ENCODE measurements at regions of chr11 and their contacts with region 1.

Region 1: GRCh38 chr11:118610804-118611795 is 3.7 kb downstream of the PHLDB1 start:
- DNase-seq: peak; percentile 78
- H3K4me3 Mint-ChIP-seq: peak overlapping the region; percentile 59
- H3K27ac Mint-ChIP-seq: no peak overlapping the region
- H3K4me1 Mint-ChIP-seq: peaks cover 24% of the 10 kb centered on the region
- H3K27me3 Mint-ChIP-seq: peaks cover 41% of the 10 kb centered on the region

Region 2: GRCh38 chr11:118621071-118621783 is 10.1 kb after region 1 on chr11:
- CTCF ChIA-PET with region 1: interaction called, 22 read pairs
- POLR2A ChIA-PET with region 1: no interaction called
- DNase-seq: no peak
- H3K4me3 Mint-ChIP-seq: peak overlapping the region; percentile 37
- H3K27ac Mint-ChIP-seq: no peak overlapping the region
- H3K4me1 Mint-ChIP-seq: peaks cover 11% of the 10 kb centered on the region
- H3K27me3 Mint-ChIP-seq: peaks cover 16% of the 10 kb centered on the region

Region 3: GRCh38 chr11:118715245-118715831 is 104.2 kb after region 1 on chr11:
- CTCF ChIA-PET with region 1: no interaction called
- POLR2A ChIA-PET with region 1: no interaction called
- DNase-seq: no peak
- H3K4me3 Mint-ChIP-seq: no peak overlapping the region
- H3K27ac Mint-ChIP-seq: no peak overlapping the region
- H3K4me1 Mint-ChIP-seq: no peaks in the 10 kb centered on the region
- H3K27me3 Mint-ChIP-seq: peaks cover 4% of the 10 kb centered on the region